ENCODE measurements at regions of chr2 and their contacts with region 1.

Region 1: DNA sequence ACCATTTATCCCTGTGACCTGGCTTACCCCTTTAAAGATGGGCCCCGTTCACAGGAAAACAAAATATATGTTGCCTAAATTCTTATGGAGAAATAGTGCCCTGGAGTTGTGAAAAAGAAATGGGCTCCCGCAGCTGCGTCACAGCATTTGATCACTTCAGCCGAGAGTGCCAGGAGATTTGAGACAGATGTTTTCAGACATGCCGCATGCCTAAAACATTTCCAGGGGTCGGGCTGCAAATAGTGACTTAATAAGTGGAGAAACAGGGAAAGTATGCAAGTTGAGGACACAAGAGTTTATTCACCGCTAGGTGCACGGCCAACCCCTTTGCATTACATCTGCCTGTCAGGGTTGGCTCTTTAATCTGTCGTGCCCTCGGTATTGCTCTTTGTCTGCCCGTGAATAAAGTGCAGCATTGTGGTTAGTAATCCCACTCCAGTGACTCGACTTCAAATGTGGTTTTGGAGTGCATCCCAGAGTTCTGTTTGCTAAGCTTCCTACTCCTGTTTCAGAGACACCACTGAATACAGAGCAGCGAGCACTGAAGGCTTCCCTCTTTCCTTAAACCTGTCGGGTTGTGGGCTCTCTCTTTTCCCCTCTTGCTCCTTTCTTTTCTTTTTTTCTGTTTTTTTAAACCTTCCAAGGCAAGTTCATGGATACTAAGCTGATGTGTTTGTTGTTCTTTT is 187.5 kb downstream of the LTBP1 start:
- DNase-seq: peak; percentile 26 to 57
- ATAC-seq: peak; percentile 64 to 82 (median 74)
- H3K4me3 ChIP-seq: peak overlapping the region in 9 of 10 donors; percentile 13 to 54 (median 45)
- H3K27ac ChIP-seq: peak overlapping the region; percentile 62 to 90 (median 81)
- H3K4me1 ChIP-seq: peaks cover 7 to 75% (median 51%) of the 10 kb centered on the region in 9 donors
- H3K27me3 ChIP-seq: no peaks in the 10 kb centered on the region
- CTCF ChIP-seq: peak in 3 of 9 donors; percentile 8 to 26 (median 15)

Region 2: GRCh38 chr2:33059471-33060156 is 74.6 kb before region 1 on chr2:
- intact Hi-C with region 1: loop called in 2 of 10 experiments (anchors 5 to 10 kb)
- DNase-seq: no peak
- ATAC-seq: peak; percentile 63 to 93 (median 84)
- H3K4me3 ChIP-seq: peak overlapping the region in 4 of 10 donors; percentile 14 to 33 (median 29)
- H3K27ac ChIP-seq: peak overlapping the region; percentile 36 to 86 (median 72)
- H3K4me1 ChIP-seq: peaks cover 0 to 19% (median 9%) of the 10 kb centered on the region in 9 donors
- H3K27me3 ChIP-seq: no peaks in the 10 kb centered on the region
- CTCF ChIP-seq: no peak

Region 3: DNA sequence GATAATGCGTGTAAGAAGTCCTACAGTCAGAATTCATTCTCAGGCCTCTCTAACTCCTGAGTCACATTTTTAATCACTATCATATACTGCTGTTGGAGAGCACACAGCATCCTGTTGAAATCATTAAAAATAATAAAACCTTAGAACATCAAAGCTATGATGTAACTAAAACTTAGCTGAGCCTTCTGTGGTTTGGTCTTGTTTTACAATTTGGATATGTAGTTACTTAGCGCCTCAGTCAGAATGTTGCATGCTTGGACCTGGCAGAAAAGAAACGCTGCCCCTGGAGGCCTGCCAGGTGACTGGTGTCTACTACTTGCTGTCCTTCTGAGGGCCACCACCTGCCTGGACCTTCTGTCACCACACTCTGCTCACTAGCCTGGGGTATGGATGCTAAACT is 81.1 kb after region 1 on chr2:
- intact Hi-C with region 1: loop called in 2 of 10 experiments (anchors 2 to 5 kb)
- DNase-seq: peak; percentile 25 to 63
- ATAC-seq: peak in 7 of 8 donors; percentile 2 to 41 (median 22)
- H3K4me3 ChIP-seq: no peak overlapping the region
- H3K27ac ChIP-seq: peak overlapping the region in 6 of 10 donors; percentile 11 to 71 (median 38)
- H3K4me1 ChIP-seq: peaks cover 12 to 80% (median 52%) of the 10 kb centered on the region in 9 donors
- H3K27me3 ChIP-seq: no peaks in the 10 kb centered on the region
- CTCF ChIP-seq: no peak

Region 4: DNA sequence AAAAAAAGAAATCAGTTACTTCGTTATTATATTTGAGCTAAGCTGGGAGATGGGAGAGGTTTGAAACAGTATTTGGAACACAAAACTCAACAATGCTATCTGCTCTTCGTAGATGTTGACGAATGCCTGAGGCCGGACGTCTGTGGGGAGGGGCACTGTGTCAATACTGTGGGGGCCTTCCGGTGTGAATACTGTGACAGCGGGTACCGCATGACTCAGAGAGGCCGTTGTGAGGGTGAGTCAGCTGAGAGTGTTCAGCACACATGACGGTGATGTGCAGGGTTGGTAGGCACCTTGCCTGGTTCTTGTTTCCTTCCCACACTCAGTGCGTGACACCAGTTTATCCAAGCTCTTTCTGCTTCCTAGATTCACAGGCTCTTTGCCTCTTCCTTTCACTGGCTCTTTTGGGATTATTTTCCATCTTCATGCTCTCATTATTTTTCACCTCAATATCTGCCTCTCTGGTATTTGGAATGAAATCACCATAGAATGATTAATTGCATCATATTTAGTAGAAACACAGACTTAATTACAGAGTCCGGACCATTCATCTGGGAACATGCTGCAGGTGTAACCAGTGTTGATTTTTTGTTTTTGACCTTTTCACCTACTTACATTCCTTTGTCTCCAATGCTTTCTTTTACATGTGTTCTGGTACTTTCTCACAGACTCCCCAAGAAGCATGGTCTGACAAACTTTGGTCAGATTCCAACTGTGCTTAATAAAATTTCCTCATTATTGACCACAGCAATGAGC is 141.6 kb after region 1 on chr2:
- intact Hi-C with region 1: loop called in 1 of 10 experiments (anchors 10 kb)
- DNase-seq: peak in 1 of 2 donors; percentile 25
- ATAC-seq: peak; percentile 13 to 87 (median 58)
- H3K4me3 ChIP-seq: no peak overlapping the region
- H3K27ac ChIP-seq: peak overlapping the region in 4 of 10 donors; percentile 13 to 71 (median 51)
- H3K4me1 ChIP-seq: peaks cover 0 to 32% (median 3%) of the 10 kb centered on the region in 9 donors
- H3K27me3 ChIP-seq: no peaks in the 10 kb centered on the region
- CTCF ChIP-seq: no peak